Left cardiac atrium (tissue), 4 donors: ENCODE measurements at regions of chr1 and their contacts with region 1.

Region 1: GRCh38 chr1:64268653-64269557 is 65.5 kb downstream of the UBE2U start:
- DNase-seq: peak; percentile 75
- ATAC-seq: peak; percentile 84 to 88

Region 2: DNA sequence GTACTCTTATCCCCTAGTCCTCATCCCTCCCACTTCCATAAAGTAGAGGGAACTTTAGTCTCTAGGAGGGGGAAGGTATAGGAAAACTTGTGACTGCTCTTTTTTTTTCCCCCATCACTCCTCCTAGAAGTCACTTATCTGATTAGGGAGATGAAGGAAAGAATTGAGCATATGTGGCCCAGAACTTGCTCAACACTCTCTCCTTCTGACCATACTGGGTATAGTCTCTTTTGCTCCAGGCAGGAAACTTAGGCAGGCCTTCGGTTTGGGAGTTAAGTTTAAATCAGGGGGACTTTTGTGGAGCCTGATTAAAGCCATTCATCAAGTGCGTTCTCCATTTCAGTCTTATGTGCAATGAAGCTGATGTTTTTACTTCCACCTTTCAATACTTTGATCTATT is 59.7 kb before region 1 on chr1:
- intact Hi-C with region 1: no loop called
- DNase-seq: no peak
- ATAC-seq: no peak

Region 3: DNA sequence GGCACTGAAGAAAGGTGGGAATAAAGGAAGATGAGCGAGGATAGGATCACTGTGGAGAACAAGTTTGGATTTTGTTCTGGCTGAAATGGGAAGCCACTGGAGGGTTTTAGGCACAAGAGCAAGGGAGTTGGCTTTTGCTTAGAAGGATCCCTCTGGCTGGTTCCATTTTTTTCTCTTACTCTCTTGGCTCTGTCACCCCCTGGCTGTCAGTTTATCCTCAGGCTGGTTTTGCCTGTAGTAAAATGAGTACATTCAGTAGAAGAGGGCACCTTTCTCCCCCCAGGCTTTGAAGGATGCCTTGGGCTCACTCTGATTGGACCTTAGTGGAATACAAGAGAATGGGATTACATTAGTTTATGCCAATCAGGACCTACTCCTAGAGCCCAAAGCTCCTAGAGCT is 218.2 kb after region 1 on chr1:
- intact Hi-C with region 1: loop called in 1 of 2 experiments (anchors 10 kb)
- DNase-seq: no peak
- ATAC-seq: no peak

Region 4: GRCh38 chr1:64675718-64676345 is 406.9 kb after region 1 on chr1:
- intact Hi-C with region 1: loop called (anchors 5 to 10 kb)
- DNase-seq: no peak
- ATAC-seq: no peak

Region 5: GRCh38 chr1:64686828-64687724 is 418.2 kb after region 1 on chr1:
- intact Hi-C with region 1: loop called in 1 of 2 experiments (anchors 5 kb)
- DNase-seq: no peak
- ATAC-seq: peak; percentile 47 to 73

Region 6: DNA sequence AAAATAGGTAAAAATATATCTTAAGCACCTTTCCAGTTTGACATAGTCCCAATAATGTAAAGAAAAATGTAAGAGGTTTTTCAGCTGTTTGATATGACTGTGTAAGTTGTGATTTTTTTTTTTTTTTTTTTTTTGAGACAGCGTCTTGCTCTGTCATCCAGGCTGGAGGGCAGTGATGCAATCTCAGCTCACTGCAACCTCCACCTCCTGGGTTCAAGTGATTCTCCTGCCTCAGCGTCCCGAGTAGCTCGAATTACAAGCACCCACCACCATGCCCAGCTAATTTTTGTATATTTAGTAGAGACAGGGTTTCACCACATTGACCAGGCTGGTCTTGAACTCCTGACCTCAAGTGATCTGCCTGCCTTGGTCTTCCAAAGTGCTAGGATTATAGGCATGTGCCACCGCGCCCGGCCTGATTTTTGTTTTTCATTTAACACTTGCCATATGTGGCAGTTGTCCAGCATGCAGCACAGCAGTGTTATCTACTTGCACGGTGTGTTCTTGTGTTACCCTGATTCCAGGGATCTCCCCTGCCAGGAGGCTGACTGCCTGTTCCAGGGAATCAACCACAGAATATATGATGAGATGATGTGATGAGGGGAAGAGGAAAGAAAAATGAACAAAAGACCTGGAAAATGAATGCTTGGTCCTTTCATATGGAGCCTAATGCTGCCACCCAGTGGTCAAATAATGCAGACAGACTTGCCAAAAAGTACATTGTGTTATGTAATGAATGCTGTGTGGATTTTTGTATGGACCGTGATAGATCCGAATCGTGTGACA is 555.0 kb after region 1 on chr1:
- intact Hi-C with region 1: loop called in 1 of 2 experiments (anchors 2 kb)
- DNase-seq: no peak
- ATAC-seq: peak; percentile 72 to 79